Calu3 (cell line): ENCODE measurements at regions of chr15 and their contacts with region 1.

Region 1: DNA sequence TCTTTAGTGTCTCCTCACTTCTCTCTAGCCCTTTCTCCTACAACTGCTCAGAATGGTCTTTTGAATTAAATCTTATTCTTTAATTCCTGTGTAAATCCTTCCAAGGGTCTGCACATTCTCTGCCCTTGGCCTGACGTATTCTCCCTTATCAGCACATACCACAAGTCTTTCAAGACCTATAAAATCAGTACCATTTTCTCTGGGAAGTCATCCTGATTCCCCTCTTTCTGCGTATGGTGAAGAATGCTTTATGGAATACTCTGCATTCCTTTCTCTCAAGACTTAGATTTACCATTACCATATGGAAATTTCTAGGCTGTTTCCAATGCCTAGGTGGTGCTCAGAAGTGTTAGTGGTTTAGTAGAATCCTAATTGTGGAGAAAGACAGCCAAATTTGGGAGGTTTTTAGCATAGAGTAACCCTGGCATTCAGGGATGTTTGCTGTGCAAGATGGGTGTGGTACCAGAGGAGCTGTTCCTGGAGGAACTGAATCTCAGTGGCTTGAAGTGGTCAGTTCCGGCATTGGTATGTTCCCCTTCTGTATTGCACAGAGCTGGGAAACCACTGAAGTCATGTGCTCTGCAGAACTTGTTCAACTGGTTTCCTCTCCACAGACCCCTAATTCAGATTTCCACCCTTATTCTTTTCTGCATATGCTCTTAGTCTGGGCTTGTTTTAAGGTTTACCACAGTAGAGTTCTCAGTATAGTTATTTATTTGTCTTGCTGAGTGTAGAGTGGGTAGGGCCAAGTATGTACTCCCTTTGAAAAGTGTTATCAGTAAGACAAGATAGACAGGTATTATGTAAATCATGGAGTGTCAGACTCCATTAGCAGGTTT is 24.5 kb downstream of the IQGAP1 start:
- DNase-seq: peak; percentile 79
- H3K4me3 Mint-ChIP-seq: peak overlapping the region; percentile 55
- H3K27ac Mint-ChIP-seq: peak overlapping the region; percentile 92
- H3K4me1 Mint-ChIP-seq: peaks cover 63% of the 10 kb centered on the region
- H3K27me3 Mint-ChIP-seq: no peaks in the 10 kb centered on the region
- CTCF ChIP-seq: no peak

Region 2: DNA sequence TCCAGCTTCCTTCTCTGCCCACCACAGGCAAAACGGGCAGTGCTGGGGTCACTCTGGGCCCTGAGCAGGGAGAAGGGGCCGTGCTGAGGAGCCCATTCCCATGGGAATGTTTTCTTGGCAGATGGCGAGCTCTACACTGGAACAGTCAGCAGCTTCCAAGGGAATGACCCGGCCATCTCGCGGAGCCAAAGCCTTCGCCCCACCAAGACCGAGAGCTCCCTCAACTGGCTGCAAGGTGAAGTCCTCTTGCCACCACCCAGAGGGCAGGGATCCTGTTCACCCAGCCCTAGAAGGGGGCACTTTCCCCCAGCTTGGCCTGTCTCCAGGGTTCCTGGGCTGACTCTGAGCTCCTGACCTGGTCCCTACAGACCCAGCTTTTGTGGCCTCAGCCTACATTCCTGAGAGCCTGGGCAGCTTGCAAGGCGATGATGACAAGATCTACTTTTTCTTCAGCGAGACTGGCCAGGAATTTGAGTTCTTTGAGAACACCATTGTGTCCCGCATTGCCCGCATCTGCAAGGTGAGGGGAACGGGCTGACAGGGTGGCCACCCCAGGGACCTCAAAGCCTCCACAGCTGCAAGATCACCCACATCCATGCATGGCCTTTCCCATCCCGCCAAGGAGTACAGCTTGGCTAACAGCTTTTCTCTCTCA is 191.2 kb before region 1 on chr15:
- CTCF ChIA-PET with region 1: no interaction called
- intact Hi-C with region 1: no loop called
- DNase-seq: peak; percentile 85
- H3K4me3 Mint-ChIP-seq: no peak overlapping the region
- H3K27ac Mint-ChIP-seq: no peak overlapping the region
- H3K4me1 Mint-ChIP-seq: peaks cover 18% of the 10 kb centered on the region
- H3K27me3 Mint-ChIP-seq: no peaks in the 10 kb centered on the region
- CTCF ChIP-seq: peak; percentile 74

Region 3: DNA sequence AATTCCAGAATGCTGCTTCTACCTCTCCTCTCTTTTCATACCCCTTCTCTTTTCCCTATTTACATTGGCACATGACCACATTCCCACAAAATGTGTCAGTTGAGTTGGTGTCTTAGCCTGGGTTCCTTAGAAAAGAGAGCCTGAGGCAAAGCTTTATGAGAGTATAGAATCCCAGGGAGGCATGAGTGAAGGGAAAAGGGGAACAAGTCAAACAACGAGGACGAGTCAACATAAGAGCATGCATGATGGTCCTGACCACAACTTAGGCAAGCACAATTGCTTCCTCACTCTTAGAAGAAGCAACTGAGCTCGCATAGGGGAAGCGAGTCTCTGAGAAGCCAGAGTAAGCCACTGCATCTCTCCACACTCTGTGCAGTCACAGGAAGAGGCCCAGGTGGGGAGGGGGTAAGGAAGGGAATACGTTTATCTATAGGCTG is 75.9 kb before region 1 on chr15:
- CTCF ChIA-PET with region 1: no interaction called
- intact Hi-C with region 1: loop called (anchors 5 kb)
- DNase-seq: no peak
- H3K4me3 Mint-ChIP-seq: no peak overlapping the region
- H3K27ac Mint-ChIP-seq: no peak overlapping the region
- H3K4me1 Mint-ChIP-seq: peaks cover 50% of the 10 kb centered on the region
- H3K27me3 Mint-ChIP-seq: no peaks in the 10 kb centered on the region
- CTCF ChIP-seq: no peak

Region 4: GRCh38 chr15:90387537-90388461 is 24.8 kb before region 1 on chr15 and contains the start of gene IQGAP1:
- CTCF ChIA-PET with region 1: interaction called, 13 read pairs
- intact Hi-C with region 1: no loop called
- DNase-seq: peak; percentile 99
- H3K4me3 Mint-ChIP-seq: peak within 1 kb of the TSS; percentile 74
- H3K27ac Mint-ChIP-seq: peak within 1 kb of the TSS; percentile 75
- H3K4me1 Mint-ChIP-seq: peaks cover 38% of the 10 kb centered on the region
- H3K27me3 Mint-ChIP-seq: no peaks in the 10 kb centered on the region
- CTCF ChIP-seq: no peak
- total RNA-seq, gene IQGAP1: 193 and 206 TPM in 2 replicates

Region 5: GRCh38 chr15:91348752-91349500 is 936.4 kb after region 1 on chr15:
- CTCF ChIA-PET with region 1: no interaction called
- intact Hi-C with region 1: no loop called
- DNase-seq: no peak
- H3K4me3 Mint-ChIP-seq: no peak overlapping the region
- H3K27ac Mint-ChIP-seq: no peak overlapping the region
- H3K4me1 Mint-ChIP-seq: no peaks in the 10 kb centered on the region
- H3K27me3 Mint-ChIP-seq: no peaks in the 10 kb centered on the region
- CTCF ChIP-seq: no peak